Activated naive CD4-positive, alpha-beta T cell treated with anti-CD3 and anti-CD28 coated beads for 36 hours (primary cell): ENCODE measurements at regions of chrX and their contacts with region 1.

Region 1: GRCh38 chrX:66200855-66201795 is 37.1 kb downstream of the HEPH start:
- DNase-seq: no peak
- H3K4me3 Mint-ChIP-seq: no peak overlapping the region
- H3K27ac Mint-ChIP-seq: no peak overlapping the region
- H3K4me1 Mint-ChIP-seq: peaks cover 28% of the 10 kb centered on the region
- H3K27me3 Mint-ChIP-seq: no peaks in the 10 kb centered on the region

Region 2: GRCh38 chrX:65581661-65582339 is 619.3 kb before region 1 on chrX:
- CTCF ChIA-PET with region 1: no interaction called
- intact Hi-C with region 1: loop called (anchors 1 kb)
- DNase-seq: peak; percentile 69
- H3K4me3 Mint-ChIP-seq: no peak overlapping the region
- H3K27ac Mint-ChIP-seq: no peak overlapping the region
- H3K4me1 Mint-ChIP-seq: peaks cover 6% of the 10 kb centered on the region
- H3K27me3 Mint-ChIP-seq: no peaks in the 10 kb centered on the region

Region 3: GRCh38 chrX:65932176-65933084 is 268.7 kb before region 1 on chrX:
- CTCF ChIA-PET with region 1: no interaction called
- intact Hi-C with region 1: no loop called
- DNase-seq: peak; percentile 66
- H3K4me3 Mint-ChIP-seq: no peak overlapping the region
- H3K27ac Mint-ChIP-seq: peak overlapping the region; percentile 73
- H3K4me1 Mint-ChIP-seq: peaks cover 20% of the 10 kb centered on the region
- H3K27me3 Mint-ChIP-seq: no peaks in the 10 kb centered on the region

Region 4: GRCh38 chrX:66030505-66031317 is 170.4 kb before region 1 on chrX:
- CTCF ChIA-PET with region 1: no interaction called
- intact Hi-C with region 1: loop called (anchors 5 kb)
- DNase-seq: peak; percentile 37
- H3K4me3 Mint-ChIP-seq: no peak overlapping the region
- H3K27ac Mint-ChIP-seq: no peak overlapping the region
- H3K4me1 Mint-ChIP-seq: peaks cover 5% of the 10 kb centered on the region
- H3K27me3 Mint-ChIP-seq: no peaks in the 10 kb centered on the region